H1 (cell line): ENCODE measurements at regions of chr12 and their contacts with region 1.

Region 1: DNA sequence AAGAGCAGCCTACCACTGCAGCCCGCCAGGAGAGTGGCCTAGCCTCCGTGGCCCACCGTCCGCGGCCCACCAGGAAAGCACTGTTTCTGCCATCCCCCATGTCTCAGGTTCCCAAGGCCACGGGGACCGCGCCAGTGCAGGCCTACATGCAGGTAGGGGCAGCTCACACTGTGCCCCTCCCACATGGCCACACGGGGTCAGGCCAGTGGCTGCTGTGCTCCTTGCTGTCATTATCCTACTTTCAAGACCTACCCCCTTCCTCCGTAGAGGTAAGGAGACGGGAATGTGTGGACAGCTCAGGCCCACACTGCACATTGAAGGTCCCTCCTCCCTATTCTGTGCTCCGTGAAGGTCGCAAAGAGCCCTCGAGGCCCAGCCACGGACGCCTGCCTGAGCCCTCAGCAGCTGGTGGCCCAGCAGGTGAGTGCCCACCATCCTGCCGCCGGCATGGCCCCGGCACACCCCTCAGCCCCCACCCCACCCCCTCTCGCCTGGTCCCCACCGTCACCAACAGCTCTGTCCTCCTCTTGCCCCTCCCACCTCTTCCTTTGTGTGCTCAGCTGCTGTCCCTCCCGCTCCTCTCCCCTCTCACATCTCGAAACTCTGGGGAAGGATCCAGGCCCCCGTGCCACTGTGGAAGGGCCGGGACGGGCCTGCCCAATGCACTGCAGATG is 10.0 kb downstream of the DDX51 start:
- DNase-seq: no peak
- H3K4me3 ChIP-seq: no peak overlapping the region
- H3K27ac ChIP-seq: no peak overlapping the region
- H3K4me1 ChIP-seq: no peaks in the 10 kb centered on the region
- H3K27me3 ChIP-seq: peaks cover 0 to 4% (median 1%) of the 10 kb centered on the region in 4 experiments; a peak in 3 of 7 replicates
- CTCF ChIP-seq: peak in 1 of 3 experiments; percentile 15; a peak in 1 of 4 replicates
- EP300 ChIP-seq: no peak
- POLR2A ChIP-seq: no peak
- RAD21 ChIP-seq: no peak

Region 2: GRCh38 chr12:132144115-132144812 is 10.2 kb after region 1 on chr12 and contains the starts of genes DDX51 and NOC4L:
- CTCF ChIA-PET with region 1: interaction called, 6 read pairs
- POLR2A ChIA-PET with region 1: interaction called, 15 read pairs
- DNase-seq: peak; percentile 79 to 100
- H3K4me3 ChIP-seq: peak within 1 kb of the TSS; percentile 83 to 96 (median 88)
- H3K27ac ChIP-seq: peak within 1 kb of the TSS; percentile 54; the same call in 1 of the 2 replicates
- H3K4me1 ChIP-seq: peaks cover 0 to 15% (median 4%) of the 10 kb centered on the region in 4 experiments; a peak in 5 of 7 replicates
- H3K27me3 ChIP-seq: no peaks in the 10 kb centered on the region
- CTCF ChIP-seq: peak in 1 of 3 experiments; percentile 0; a peak in 1 of 4 replicates
- EP300 ChIP-seq: peak in 1 of 2 experiments; percentile 90; a peak in 2 of 3 replicates
- POLR2A ChIP-seq: peak in 1 of 2 experiments; percentile 48; a peak in 1 of 3 replicates
- RAD21 ChIP-seq: no peak; a peak in 1 of 4 replicates
- total RNA-seq, gene DDX51: 24.4 and 25.3 TPM in 2 replicates
- total RNA-seq, gene NOC4L: 38.5 and 40.3 TPM in 2 replicates